ENCODE measurements at regions of chr11 and their contacts with region 1.

Region 1: DNA sequence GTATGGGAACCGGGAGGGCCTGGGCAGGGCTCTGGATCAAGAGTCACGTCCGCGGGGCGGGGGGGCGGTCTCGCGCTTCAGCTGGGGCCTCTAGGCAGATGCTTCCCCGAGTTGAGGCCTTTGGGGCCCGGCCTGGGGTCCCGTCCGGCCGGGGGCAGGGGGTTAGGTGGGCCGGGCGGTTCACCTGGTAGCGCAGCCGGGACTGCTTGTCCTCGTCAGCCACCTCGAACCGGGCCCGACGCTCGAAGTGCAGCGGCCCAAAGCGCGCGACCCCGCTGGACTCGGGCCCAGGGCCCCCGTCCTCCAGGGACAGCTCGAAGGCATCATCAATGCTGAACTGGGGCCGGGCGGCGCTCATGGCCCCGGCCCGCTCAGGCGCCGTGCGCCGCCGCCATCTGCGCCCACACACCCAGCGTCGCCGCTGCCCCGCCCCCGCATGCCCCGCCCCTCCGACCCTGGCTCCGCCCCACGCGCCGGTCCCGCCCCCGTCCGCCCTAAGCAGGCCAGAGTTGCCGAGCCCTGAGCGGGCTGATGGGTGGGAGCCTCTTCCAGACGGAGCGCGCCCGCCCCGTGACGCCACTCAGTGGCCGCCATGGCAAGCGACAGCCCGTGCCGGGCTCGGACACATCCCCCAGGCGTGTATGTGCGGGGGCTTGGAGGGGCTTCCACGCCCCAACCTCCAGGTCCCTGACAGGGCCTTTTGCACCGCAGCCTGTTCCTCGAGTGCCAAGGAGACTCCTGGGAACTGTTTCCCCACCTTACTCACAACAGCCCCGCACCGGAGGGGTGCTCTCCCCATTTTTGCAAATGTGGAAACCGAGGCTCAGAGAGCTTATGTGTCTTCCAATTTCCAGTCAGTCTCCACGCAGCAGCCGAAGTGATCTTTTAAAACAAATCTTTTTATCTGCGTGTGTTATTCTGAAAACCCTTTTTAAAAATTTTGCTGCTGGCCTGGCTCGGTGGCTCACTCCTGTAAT is at the start of gene TMEM134:
- DNase-seq: peak; percentile 96
- H3K4me3 ChIP-seq: peak within 1 kb of the TSS; percentile 87
- H3K27ac ChIP-seq: peak within 1 kb of the TSS; percentile 76
- H3K4me1 ChIP-seq: peaks cover 52% of the 10 kb centered on the region
- CTCF ChIP-seq: peak; percentile 71
- total RNA-seq, gene TMEM134: 26.8 and 38.8 TPM in 2 replicates

Region 2: DNA sequence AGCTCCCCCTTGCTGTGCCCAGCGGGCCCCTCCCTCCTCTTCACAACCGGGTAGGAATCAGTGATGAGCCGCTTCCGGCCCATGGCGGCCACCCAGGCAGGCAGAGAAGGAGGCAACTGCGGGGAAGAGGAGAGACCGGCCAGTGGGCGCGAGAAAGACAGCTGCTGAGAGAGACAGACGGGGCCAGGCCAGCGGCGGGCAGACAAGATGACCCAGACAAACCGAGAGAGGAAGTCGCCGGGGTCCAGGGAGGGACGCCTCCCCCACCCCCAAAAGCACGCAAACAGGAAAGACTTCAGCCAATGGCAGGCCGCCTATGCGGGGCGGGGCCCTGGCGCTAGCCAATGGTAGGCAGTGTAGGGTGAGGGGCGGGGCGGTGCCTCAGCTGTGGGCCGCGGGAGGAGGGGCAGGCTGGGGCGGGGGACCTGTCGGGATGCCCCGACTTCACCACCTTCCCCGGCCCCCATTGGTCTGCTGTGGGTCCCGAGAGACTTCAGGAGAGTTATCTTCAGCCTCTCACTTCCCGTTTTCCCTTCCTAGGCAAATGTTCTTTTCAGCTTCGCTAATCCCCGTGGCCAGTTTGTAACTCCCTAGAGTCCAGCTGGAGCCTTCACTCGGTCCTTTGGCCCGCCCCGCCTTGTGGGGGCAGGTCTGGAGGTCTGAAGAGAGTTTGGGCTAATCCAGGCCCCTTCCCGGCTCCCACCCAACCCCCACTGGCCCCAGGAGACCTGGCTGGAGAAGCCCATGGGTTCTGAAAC is 115.6 kb before region 1 on chr11 and contains the start of gene POLD4:
- CTCF ChIA-PET with region 1: interaction called, 3 read pairs
- POLR2A ChIA-PET with region 1: no interaction called
- intact Hi-C with region 1: loop called (anchors 5 kb)
- DNase-seq: peak; percentile 99
- H3K4me3 ChIP-seq: peak within 1 kb of the TSS; percentile 77
- H3K27ac ChIP-seq: peak within 1 kb of the TSS; percentile 93
- H3K4me1 ChIP-seq: peaks cover 78% of the 10 kb centered on the region
- CTCF ChIP-seq: no peak
- total RNA-seq, gene POLD4: 146 and 153 TPM in 2 replicates

Region 3: DNA sequence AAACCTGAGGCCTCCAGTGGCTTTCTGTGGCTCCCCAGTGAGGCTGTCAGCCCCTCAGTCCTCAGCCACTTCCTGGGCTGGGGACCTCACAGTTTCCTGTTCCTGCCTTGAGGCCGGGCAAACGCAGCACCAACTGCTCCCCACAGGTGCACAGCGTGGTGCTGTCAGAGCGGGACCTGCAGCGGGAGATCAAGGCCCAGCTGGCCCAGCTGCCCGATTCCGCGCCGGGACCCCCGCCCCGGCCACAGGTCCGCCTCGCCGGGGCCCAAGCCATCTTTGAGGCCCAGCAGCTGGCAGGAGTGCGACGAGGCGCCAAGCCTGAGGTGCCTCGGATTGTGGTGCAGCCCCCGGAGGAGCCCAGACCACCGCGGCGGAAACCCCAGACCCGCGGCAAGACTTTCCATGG is 59.9 kb before region 1 on chr11:
- CTCF ChIA-PET with region 1: interaction called, 3 read pairs
- POLR2A ChIA-PET with region 1: interaction called, 4 read pairs
- intact Hi-C with region 1: loop called (anchors 2 kb)
- DNase-seq: peak; percentile 95
- H3K4me3 ChIP-seq: peak overlapping the region; percentile 79
- H3K27ac ChIP-seq: peak overlapping the region; percentile 97
- H3K4me1 ChIP-seq: peaks cover 88% of the 10 kb centered on the region
- CTCF ChIP-seq: no peak

Region 4: DNA sequence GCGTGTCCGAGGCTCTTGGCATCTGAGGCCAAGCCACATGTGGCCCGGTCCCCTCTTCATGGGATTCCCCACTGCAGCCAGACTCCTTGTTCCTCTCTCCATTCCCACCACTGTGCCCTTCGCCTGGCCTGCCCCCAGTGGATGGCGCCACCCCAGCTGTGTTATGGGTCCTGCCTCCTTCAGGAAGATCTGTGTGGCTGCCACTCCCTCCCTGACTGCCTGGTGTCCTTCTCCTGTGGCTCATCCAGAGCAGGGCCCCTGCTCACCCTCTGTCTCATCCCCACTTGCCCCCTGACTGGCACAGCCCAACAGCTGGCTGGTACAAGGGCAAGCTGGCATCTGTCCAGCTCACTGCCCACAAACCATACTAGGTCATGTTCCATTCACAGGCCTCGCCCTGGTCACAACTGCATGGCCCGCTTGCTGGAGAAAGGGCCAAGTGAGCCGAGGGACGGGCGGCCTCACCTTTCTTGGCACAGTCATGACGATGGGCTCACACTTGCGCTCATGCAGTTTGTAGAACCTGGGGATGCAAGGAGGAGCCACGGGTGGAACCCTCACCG is 29.7 kb before region 1 on chr11:
- CTCF ChIA-PET with region 1: interaction called, 3 read pairs
- POLR2A ChIA-PET with region 1: interaction called, 20 read pairs
- intact Hi-C with region 1: loop called (anchors 1 kb)
- DNase-seq: no peak
- H3K4me3 ChIP-seq: peak overlapping the region; percentile 81
- H3K27ac ChIP-seq: peak overlapping the region; percentile 94
- H3K4me1 ChIP-seq: peaks cover 80% of the 10 kb centered on the region
- CTCF ChIP-seq: peak; percentile 72

Region 5: DNA sequence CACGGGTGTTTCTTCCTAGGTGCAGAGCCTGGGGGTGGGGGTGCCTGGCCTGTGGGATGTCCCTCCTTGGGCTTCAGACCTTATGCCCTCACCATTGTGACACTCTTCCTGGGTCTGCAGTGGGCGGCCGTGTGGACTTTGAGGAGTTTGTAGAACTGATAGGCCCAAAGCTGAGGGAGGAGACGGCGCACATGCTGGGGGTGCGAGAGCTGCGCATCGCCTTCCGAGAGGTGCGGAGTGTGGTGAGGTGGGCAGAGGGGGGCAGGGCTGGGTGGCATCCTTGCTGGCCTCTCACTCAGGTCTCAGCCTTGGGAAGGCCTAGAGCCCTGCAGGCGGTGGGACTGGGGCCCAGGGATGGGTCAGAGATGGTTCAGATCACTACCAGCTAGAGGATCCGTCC is 11.7 kb before region 1 on chr11:
- CTCF ChIA-PET with region 1: no interaction called
- POLR2A ChIA-PET with region 1: interaction called, 13 read pairs
- intact Hi-C with region 1: no loop called
- DNase-seq: no peak
- H3K4me3 ChIP-seq: no peak overlapping the region
- H3K27ac ChIP-seq: no peak overlapping the region
- H3K4me1 ChIP-seq: peaks cover 43% of the 10 kb centered on the region
- CTCF ChIP-seq: no peak

Region 6: GRCh38 chr11:67523556-67524479 is 54.7 kb after region 1 on chr11:
- CTCF ChIA-PET with region 1: no interaction called
- POLR2A ChIA-PET with region 1: no interaction called
- intact Hi-C with region 1: no loop called
- DNase-seq: no peak
- H3K4me3 ChIP-seq: no peak overlapping the region
- H3K27ac ChIP-seq: no peak overlapping the region
- H3K4me1 ChIP-seq: no peaks in the 10 kb centered on the region
- CTCF ChIP-seq: no peak